ENCODE measurements at regions of chr4 and their contacts with region 1.

Region 1: GRCh38 chr4:20428436-20429160 is 176.9 kb downstream of the SLIT2 start:
- DNase-seq: peak; percentile 61
- H3K4me3 ChIP-seq: no peak overlapping the region
- H3K27ac ChIP-seq: no peak overlapping the region
- H3K4me1 ChIP-seq: peaks cover 40% of the 10 kb centered on the region
- H3K27me3 ChIP-seq: no peaks in the 10 kb centered on the region
- CTCF ChIP-seq: peak; percentile 56

Region 2: GRCh38 chr4:20137176-20137575 is 291.4 kb before region 1 on chr4:
- CTCF ChIA-PET with region 1: no interaction called
- POLR2A ChIA-PET with region 1: no interaction called
- intact Hi-C with region 1: no loop called
- DNase-seq: peak; percentile 3
- H3K4me3 ChIP-seq: no peak overlapping the region
- H3K27ac ChIP-seq: no peak overlapping the region
- H3K4me1 ChIP-seq: no peaks in the 10 kb centered on the region
- H3K27me3 ChIP-seq: no peaks in the 10 kb centered on the region
- CTCF ChIP-seq: no peak

Region 3: DNA sequence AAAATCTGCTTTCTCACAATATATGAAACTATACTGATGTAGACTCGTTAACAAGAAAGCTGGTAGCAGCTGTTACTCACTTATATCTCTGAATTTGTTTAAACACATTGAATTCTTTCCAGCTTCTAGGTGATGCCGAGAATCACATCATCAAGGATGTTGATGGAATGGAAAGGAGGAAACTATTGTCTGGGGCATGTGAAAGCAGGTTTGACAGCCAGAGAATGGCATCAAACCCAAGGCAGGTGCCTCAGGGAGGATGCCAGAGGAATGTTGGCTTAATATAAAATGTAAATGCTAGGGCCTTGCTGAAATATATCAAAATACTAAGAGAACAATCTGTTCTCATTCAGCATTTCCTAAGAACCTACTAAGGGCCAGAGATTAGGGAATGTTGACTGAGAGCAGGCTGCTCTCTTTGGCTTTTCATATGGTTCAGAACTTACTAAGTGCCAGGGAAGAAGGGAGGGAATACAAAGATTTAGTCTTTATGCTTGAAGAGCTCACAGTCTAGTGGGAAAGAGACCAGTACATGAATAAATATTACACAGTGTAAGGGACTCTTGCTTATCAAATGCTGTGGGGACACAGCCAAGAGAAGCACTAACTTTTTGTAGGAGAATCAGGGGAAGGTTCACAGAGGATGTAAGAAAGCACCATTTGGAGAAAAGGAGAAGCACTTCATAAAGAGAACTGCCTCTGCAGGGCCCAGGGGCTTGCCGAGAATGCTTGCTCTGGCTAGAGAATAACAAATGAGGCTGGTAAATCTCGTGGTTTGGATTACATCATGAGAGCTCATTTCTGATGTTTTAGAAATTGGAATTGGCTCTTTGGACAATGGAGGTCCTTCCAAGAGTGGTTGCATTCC is 162.1 kb before region 1 on chr4:
- CTCF ChIA-PET with region 1: no interaction called
- POLR2A ChIA-PET with region 1: no interaction called
- intact Hi-C with region 1: no loop called
- DNase-seq: no peak
- H3K4me3 ChIP-seq: no peak overlapping the region
- H3K27ac ChIP-seq: no peak overlapping the region
- H3K4me1 ChIP-seq: peaks cover 5% of the 10 kb centered on the region
- H3K27me3 ChIP-seq: no peaks in the 10 kb centered on the region
- CTCF ChIP-seq: no peak

Region 4: GRCh38 chr4:20576861-20577260 is 148.3 kb after region 1 on chr4:
- CTCF ChIA-PET with region 1: interaction called, 10 read pairs
- POLR2A ChIA-PET with region 1: no interaction called
- intact Hi-C with region 1: no loop called
- DNase-seq: no peak
- H3K4me3 ChIP-seq: no peak overlapping the region
- H3K27ac ChIP-seq: no peak overlapping the region
- H3K4me1 ChIP-seq: peaks cover 3% of the 10 kb centered on the region
- H3K27me3 ChIP-seq: no peaks in the 10 kb centered on the region
- CTCF ChIP-seq: no peak